Activated T-helper 2 cell treated with anti-CD3 and anti-CD28 coated beads, Interferon-gamma antibody, Interleukin-2, Interleukin-4, amounts not matched to agents 10 μg/mL and 5 μg/mL and 100 μg/mL, durations not matched to agents 14 hours and 24 hours and 36 hours (primary cell): ENCODE measurements at regions of chr20 and their contacts with region 1.

Region 1: GRCh38 chr20:47847868-47848531 is 62.7 kb upstream of the SULF2 start:
- DNase-seq: no peak
- H3K4me3 Mint-ChIP-seq: no peak overlapping the region
- H3K27ac Mint-ChIP-seq: no peak overlapping the region
- H3K4me1 Mint-ChIP-seq: no peaks in the 10 kb centered on the region
- H3K27me3 Mint-ChIP-seq: peaks cover 1% of the 10 kb centered on the region

Region 2: DNA sequence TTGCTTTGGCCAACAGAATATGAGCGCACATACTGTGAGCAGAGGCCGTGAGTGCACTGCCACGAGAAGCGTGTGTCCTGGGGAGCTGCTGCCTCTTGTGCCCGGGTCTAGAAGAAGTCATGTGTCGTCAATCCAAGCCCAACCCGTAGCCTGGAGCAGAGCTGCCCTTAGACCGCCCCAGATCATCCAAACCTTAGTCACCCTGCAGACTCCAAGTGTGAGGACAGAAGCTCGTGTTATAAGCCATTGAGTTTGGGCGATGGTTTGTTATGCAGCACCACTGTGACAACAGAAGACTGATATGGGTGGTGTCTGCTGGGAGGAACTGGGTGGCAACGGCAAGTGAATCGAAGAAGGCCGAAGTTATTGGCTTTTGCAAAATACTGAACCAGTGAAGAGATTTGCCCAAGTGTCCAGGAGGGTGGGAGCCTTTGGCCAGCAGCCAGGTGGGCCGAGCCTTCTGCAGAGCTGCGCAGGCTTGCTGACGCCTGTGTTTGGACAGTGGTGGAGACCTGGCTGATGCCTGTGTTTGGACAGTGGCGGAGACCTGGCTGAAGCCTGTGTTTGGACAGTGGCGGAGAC is 38.6 kb after region 1 on chr20:
- intact Hi-C with region 1: loop called (anchors 10 kb)
- DNase-seq: no peak
- H3K4me3 Mint-ChIP-seq: no peak overlapping the region
- H3K27ac Mint-ChIP-seq: no peak overlapping the region
- H3K4me1 Mint-ChIP-seq: no peaks in the 10 kb centered on the region
- H3K27me3 Mint-ChIP-seq: no peaks in the 10 kb centered on the region